HepG2 (cell line): ENCODE measurements at regions of chr10 and their contacts with region 1.

Region 1: GRCh38 chr10:91908337-91909116 is 759 bp downstream of the FGFBP3 start:
- DNase-seq: peak; percentile 83
- ATAC-seq: peak; percentile 98
- H3K4me3 ChIP-seq: peak overlapping the region; percentile 69 to 80 (median 78)
- H3K27ac ChIP-seq: peak overlapping the region; percentile 61
- H3K4me1 ChIP-seq: peaks cover 37% of the 10 kb centered on the region
- H3K27me3 ChIP-seq: no peaks in the 10 kb centered on the region; a peak in 1 of 5 replicates
- CTCF ChIP-seq: peak; percentile 92
- EP300 ChIP-seq: no peak
- POLR2A ChIP-seq: peak; percentile 72 to 75
- RAD21 ChIP-seq: peak; percentile 57

Region 2: GRCh38 chr10:91643700-91644099 is 264.8 kb before region 1 on chr10:
- CTCF ChIA-PET with region 1: interaction called, 5 read pairs
- POLR2A ChIA-PET with region 1: no interaction called
- in situ Hi-C with region 1: no loop called
- intact Hi-C with region 1: loop called (anchors 5 kb)
- DNase-seq: peak; percentile 24
- ATAC-seq: peak; percentile 89
- H3K4me3 ChIP-seq: no peak overlapping the region
- H3K27ac ChIP-seq: no peak overlapping the region
- H3K4me1 ChIP-seq: no peaks in the 10 kb centered on the region
- H3K27me3 ChIP-seq: peaks cover 0 to 1% of the 10 kb centered on the region in 2 experiments; a peak in 1 of 5 replicates
- CTCF ChIP-seq: peak; percentile 76
- EP300 ChIP-seq: no peak
- POLR2A ChIP-seq: no peak
- RAD21 ChIP-seq: peak; percentile 52

Region 3: GRCh38 chr10:91713461-91714072 is 195.0 kb before region 1 on chr10:
- CTCF ChIA-PET with region 1: no interaction called
- POLR2A ChIA-PET with region 1: no interaction called
- in situ Hi-C with region 1: no loop called
- intact Hi-C with region 1: no loop called
- DNase-seq: no peak
- ATAC-seq: no peak
- H3K4me3 ChIP-seq: no peak overlapping the region
- H3K27ac ChIP-seq: no peak overlapping the region
- H3K4me1 ChIP-seq: no peaks in the 10 kb centered on the region
- H3K27me3 ChIP-seq: no peaks in the 10 kb centered on the region
- CTCF ChIP-seq: no peak
- EP300 ChIP-seq: no peak
- POLR2A ChIP-seq: no peak
- RAD21 ChIP-seq: no peak

Region 4: GRCh38 chr10:91797874-91798648 is 110.5 kb before region 1 on chr10 and contains the start of gene TNKS2:
- CTCF ChIA-PET with region 1: no interaction called
- POLR2A ChIA-PET with region 1: interaction called, 5 read pairs
- in situ Hi-C with region 1: no loop called
- intact Hi-C with region 1: loop called (anchors 5 kb)
- DNase-seq: peak; percentile 87
- ATAC-seq: peak; percentile 91
- H3K4me3 ChIP-seq: peak within 1 kb of the TSS; percentile 86 to 90 (median 87)
- H3K27ac ChIP-seq: peak within 1 kb of the TSS; percentile 90
- H3K4me1 ChIP-seq: peaks cover 55% of the 10 kb centered on the region
- H3K27me3 ChIP-seq: no peaks in the 10 kb centered on the region; a peak in 1 of 5 replicates
- CTCF ChIP-seq: no peak
- EP300 ChIP-seq: no peak; a peak in 1 of 4 replicates
- POLR2A ChIP-seq: peak; percentile 86
- RAD21 ChIP-seq: peak; percentile 52; the same call in 1 of the 2 replicates
- total RNA-seq, gene TNKS2: 15.2 and 25.5 TPM in 2 replicates

Region 5: DNA sequence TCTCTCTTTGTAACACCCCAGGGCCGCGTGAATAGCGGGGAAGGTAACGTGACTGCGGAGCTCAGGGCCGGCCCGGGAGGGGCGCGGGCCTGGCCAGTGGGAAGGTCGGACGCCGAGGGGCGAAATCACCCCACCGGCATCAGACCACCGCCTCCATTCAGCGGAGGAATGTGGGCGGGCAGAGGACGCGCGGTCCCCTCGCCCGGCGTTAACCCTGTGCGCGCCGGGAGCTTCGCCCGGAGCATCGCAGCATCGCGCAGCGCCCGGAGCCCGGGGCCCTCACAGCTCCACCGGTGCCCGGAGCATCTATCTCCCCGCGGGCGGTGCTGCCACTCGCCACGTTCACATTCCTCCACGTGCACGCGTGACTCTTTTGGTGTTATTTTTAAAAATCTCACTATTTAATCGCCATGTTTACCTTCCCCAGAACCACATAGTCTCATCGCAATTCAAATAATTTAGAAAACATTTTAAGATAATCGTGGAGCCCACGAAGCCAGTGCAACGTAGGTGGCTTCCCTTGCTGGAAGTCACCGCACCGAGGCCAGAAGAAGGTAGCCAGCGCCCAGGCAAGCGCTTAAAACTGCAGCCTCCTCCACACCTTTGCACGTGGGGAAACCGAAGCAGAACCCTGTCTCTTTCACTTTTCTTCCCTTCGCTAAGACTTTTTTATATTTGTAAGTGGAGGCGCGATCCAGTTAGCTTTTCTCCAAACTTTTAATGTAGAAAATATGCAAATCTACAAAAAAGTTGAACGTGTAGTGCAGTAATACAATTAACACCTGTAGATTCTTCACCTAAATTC is 21.1 kb before region 1 on chr10:
- CTCF ChIA-PET with region 1: no interaction called
- POLR2A ChIA-PET with region 1: interaction called, 13 read pairs
- in situ Hi-C with region 1: no loop called
- intact Hi-C with region 1: no loop called
- DNase-seq: peak; percentile 58
- ATAC-seq: peak; percentile 86
- H3K4me3 ChIP-seq: peak overlapping the region; percentile 56 to 69 (median 60)
- H3K27ac ChIP-seq: peak overlapping the region; percentile 20
- H3K4me1 ChIP-seq: peaks cover 51% of the 10 kb centered on the region
- H3K27me3 ChIP-seq: peaks cover 0 to 10% of the 10 kb centered on the region in 2 experiments; a peak in 1 of 5 replicates
- CTCF ChIP-seq: no peak
- EP300 ChIP-seq: no peak
- POLR2A ChIP-seq: no peak
- RAD21 ChIP-seq: no peak